Activated CD8-positive, alpha-beta T cell treated with anti-CD3 and anti-CD28 coated beads for 36 hours (primary cell): ENCODE measurements at regions of chr17 and their contacts with region 1.

Region 1: DNA sequence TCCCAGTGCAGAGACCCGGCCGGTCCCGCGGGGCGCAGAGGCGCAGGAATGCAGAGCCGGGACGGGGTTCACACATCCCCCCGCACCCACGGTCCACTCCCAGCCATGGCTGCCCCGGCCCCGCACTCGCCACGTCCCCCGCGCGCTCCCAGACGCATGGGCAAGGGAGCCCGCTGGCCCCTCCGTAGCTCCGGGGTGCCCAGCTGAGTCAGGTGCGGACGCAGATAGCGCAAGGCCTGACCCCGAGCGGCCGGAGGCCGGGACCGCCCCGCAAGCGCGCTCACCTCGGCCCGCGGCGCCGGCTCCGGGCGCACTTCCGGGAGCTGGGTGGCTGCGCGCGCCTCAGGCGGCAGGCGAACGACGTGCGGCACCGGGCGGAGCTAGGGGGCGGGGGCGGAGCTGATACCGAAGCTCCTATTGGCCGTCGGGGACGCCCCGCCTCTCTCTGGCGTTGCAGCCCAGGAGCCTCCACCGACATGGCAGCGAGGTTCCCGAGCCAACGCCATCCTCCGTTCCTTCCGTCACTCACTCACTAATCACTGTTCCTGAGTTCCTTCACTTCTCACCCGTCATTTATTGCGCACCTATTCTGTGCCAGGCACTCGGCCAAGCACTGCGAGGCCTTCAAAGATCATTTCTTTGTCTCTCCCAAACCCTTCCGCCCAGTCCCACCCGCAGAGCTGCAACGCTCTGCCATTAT is at the start of gene ZNF18:
- DNase-seq: peak; percentile 98
- ATAC-seq: peak; percentile 98
- H3K4me3 Mint-ChIP-seq: peak within 1 kb of the TSS; percentile 89
- H3K27ac Mint-ChIP-seq: peak within 1 kb of the TSS; percentile 96
- H3K4me1 Mint-ChIP-seq: peaks cover 11% of the 10 kb centered on the region
- H3K27me3 Mint-ChIP-seq: no peaks in the 10 kb centered on the region
- CTCF ChIP-seq: no peak
- total RNA-seq, gene ZNF18: 8.9 to 10.2 TPM

Region 2: GRCh38 chr17:11917415-11917814 is 79.9 kb before region 1 on chr17:
- CTCF ChIA-PET with region 1: no interaction called
- POLR2A ChIA-PET with region 1: no interaction called
- intact Hi-C with region 1: no loop called
- DNase-seq: no peak
- ATAC-seq: no peak
- H3K4me3 Mint-ChIP-seq: no peak overlapping the region
- H3K27ac Mint-ChIP-seq: no peak overlapping the region
- H3K4me1 Mint-ChIP-seq: no peaks in the 10 kb centered on the region
- H3K27me3 Mint-ChIP-seq: peaks cover 8% of the 10 kb centered on the region
- CTCF ChIP-seq: no peak

Region 3: DNA sequence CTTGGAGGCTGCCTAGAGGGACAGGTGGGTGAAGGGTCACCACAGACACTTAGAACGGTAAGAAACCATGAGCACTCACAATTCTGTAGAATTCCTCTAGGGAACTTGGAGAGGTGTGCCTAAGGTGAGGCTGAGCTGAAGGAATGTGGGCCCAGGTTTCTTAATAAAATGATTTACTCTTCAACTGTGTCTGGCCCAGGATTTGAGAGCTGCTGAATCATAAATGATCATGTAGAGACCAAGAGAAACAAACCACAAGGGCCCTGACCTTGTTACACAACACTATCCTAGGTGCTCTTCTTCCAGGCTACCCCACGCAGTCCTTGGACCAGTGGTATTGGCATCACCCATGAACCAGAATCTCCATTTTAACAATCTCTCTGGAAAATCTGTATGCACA is 27.7 kb before region 1 on chr17:
- CTCF ChIA-PET with region 1: no interaction called
- POLR2A ChIA-PET with region 1: no interaction called
- intact Hi-C with region 1: no loop called
- DNase-seq: no peak
- ATAC-seq: no peak
- H3K4me3 Mint-ChIP-seq: no peak overlapping the region
- H3K27ac Mint-ChIP-seq: no peak overlapping the region
- H3K4me1 Mint-ChIP-seq: no peaks in the 10 kb centered on the region
- H3K27me3 Mint-ChIP-seq: no peaks in the 10 kb centered on the region
- CTCF ChIP-seq: no peak

Region 4: DNA sequence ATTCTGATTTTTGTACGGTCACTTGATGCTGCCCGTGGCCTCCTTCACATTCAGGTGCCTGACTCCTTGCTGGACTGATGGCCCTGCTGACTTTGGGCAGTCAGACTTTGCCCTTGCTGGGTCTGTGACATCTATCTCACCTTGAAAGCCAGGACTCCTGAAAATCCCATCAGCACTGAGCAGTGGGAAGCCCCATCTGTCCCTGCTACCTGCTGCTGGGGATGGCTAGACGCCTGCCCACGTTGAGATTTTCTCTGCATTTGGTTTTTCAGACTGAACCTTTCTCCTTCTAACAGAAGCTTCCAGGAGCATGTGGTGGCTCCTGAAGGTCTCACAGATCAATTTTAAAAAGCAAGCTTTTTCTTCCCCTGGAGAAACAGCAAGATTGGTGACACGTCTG is 10.2 kb after region 1 on chr17:
- CTCF ChIA-PET with region 1: interaction called, 5 read pairs
- POLR2A ChIA-PET with region 1: interaction called, 16 read pairs
- intact Hi-C with region 1: no loop called
- DNase-seq: no peak
- ATAC-seq: no peak
- H3K4me3 Mint-ChIP-seq: no peak overlapping the region
- H3K27ac Mint-ChIP-seq: no peak overlapping the region
- H3K4me1 Mint-ChIP-seq: no peaks in the 10 kb centered on the region
- H3K27me3 Mint-ChIP-seq: peaks cover 5% of the 10 kb centered on the region
- CTCF ChIP-seq: no peak

Region 5: GRCh38 chr17:12020642-12021622 is 23.6 kb after region 1 on chr17 and contains the start of gene MAP2K4:
- CTCF ChIA-PET with region 1: interaction called, 8 read pairs
- POLR2A ChIA-PET with region 1: interaction called, 14 read pairs
- intact Hi-C with region 1: no loop called
- DNase-seq: peak; percentile 90
- ATAC-seq: peak; percentile 96
- H3K4me3 Mint-ChIP-seq: peak within 1 kb of the TSS; percentile 80
- H3K27ac Mint-ChIP-seq: peak within 1 kb of the TSS; percentile 77
- H3K4me1 Mint-ChIP-seq: peaks cover 42% of the 10 kb centered on the region
- H3K27me3 Mint-ChIP-seq: no peaks in the 10 kb centered on the region
- CTCF ChIP-seq: no peak
- total RNA-seq, gene MAP2K4: 45.6 to 49.0 TPM

Region 6: GRCh38 chr17:12133183-12133582 is 135.9 kb after region 1 on chr17:
- CTCF ChIA-PET with region 1: no interaction called
- POLR2A ChIA-PET with region 1: no interaction called
- intact Hi-C with region 1: no loop called
- DNase-seq: no peak
- ATAC-seq: no peak
- H3K4me3 Mint-ChIP-seq: no peak overlapping the region
- H3K27ac Mint-ChIP-seq: no peak overlapping the region
- H3K4me1 Mint-ChIP-seq: no peaks in the 10 kb centered on the region
- H3K27me3 Mint-ChIP-seq: no peaks in the 10 kb centered on the region
- CTCF ChIP-seq: no peak